Heart left ventricle (tissue), 16 donors: ENCODE measurements at regions of chr6 and their contacts with region 1.

Region 1: GRCh38 chr6:63685446-63686379 is 50.1 kb downstream of the PHF3 start:
- DNase-seq: no peak
- ATAC-seq: no peak
- H3K4me3 ChIP-seq: no peak overlapping the region
- H3K27ac ChIP-seq: peak overlapping the region in 1 of 12 donors; percentile 51
- H3K4me1 ChIP-seq: peaks cover 0 to 18% (median 8%) of the 10 kb centered on the region in 12 donors
- H3K27me3 ChIP-seq: no peaks in the 10 kb centered on the region
- CTCF ChIP-seq: no peak
- POLR2A ChIP-seq: no peak

Region 2: GRCh38 chr6:63705707-63706106 is 20.0 kb after region 1 on chr6:
- intact Hi-C with region 1: loop called in 1 of 10 experiments (anchors 2 kb)
- DNase-seq: no peak
- ATAC-seq: no peak
- H3K4me3 ChIP-seq: no peak overlapping the region
- H3K27ac ChIP-seq: no peak overlapping the region
- H3K4me1 ChIP-seq: no peaks in the 10 kb centered on the region
- H3K27me3 ChIP-seq: no peaks in the 10 kb centered on the region
- CTCF ChIP-seq: no peak
- POLR2A ChIP-seq: no peak

Region 3: DNA sequence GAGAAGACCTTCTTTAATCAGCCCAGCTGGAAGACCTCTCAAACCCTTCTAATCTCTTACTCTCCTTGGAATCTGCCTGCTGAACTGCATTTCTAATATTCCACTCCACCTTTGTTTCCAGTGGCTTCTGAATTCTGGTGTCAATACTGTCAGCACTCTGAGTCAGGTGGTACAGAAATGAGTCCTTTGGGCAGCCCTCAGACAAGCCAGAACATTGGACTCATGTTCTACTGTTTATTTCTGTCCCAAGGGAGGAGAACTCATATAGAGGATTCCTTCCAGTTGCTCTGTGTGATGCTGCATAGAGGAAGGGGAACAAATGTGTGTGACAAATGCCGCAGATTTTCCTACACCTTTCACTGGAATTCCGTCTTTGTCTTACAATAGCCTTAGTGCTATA is 64.7 kb after region 1 on chr6:
- intact Hi-C with region 1: no loop called
- DNase-seq: no peak
- ATAC-seq: no peak
- H3K4me3 ChIP-seq: no peak overlapping the region
- H3K27ac ChIP-seq: no peak overlapping the region
- H3K4me1 ChIP-seq: no peaks in the 10 kb centered on the region
- H3K27me3 ChIP-seq: no peaks in the 10 kb centered on the region
- CTCF ChIP-seq: no peak
- POLR2A ChIP-seq: no peak